Activated B cell treated with CpG ODN at 0.5 μM for 24 hours (primary cell): ENCODE measurements at regions of chr6 and their contacts with region 1.

Region 1: GRCh38 chr6:150741633-150742504 is 123.6 kb upstream of the MTHFD1L start:
- DNase-seq: no peak
- ATAC-seq: peak; percentile 72
- H3K4me3 Mint-ChIP-seq: no peak overlapping the region
- H3K27ac Mint-ChIP-seq: peak overlapping the region; percentile 57
- H3K4me1 Mint-ChIP-seq: peaks cover 66% of the 10 kb centered on the region
- H3K27me3 Mint-ChIP-seq: no peaks in the 10 kb centered on the region
- CTCF ChIP-seq: peak; percentile 52

Region 2: DNA sequence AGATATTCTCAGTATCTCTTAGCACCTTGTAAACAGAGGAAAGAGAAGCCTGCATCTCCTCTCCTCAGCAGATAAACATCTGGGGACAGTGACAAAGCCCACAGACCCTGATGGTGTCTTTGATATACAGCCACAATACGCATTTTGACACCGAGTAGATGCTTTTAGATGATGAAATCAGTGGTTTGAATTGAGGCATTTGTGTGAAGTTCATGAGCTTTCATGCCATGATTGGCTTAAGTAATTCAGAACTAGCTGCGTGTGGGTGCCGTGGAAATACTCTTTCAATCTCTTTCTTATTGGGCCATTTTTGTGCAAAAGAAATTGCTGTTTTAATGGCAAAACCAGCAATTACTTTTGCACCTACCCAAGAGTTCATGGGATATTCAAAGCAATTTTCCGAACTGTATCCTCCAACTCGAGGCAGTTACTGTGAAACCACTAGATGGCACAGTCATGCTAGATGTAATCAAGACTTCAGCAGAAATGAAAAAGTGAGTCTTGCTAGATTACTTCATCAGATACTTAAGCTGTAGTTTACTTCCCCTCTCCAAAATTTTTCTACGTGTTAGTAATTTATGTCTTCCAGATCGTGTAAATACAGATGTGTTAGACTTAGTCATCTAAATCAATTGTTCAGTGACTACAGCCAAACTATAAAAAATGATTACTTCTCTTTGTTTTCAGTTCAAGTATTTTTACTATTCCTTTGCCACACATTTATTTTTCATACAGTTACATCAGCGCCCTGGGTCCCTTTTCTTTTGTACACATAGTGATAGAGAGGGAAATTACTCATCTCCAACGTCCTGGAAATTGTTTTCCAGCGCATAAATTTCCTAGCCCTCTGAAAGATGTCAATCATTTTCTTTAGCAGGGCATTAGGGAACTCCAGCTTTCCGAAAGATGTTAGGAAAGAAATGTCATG is 323.7 kb before region 1 on chr6:
- CTCF ChIA-PET with region 1: interaction called, 60 read pairs
- POLR2A ChIA-PET with region 1: interaction called, 10 read pairs
- intact Hi-C with region 1: loop called (anchors 1 kb)
- DNase-seq: no peak
- ATAC-seq: peak; percentile 90
- H3K4me3 Mint-ChIP-seq: peak overlapping the region; percentile 82
- H3K27ac Mint-ChIP-seq: peak overlapping the region; percentile 77
- H3K4me1 Mint-ChIP-seq: peaks cover 14% of the 10 kb centered on the region
- H3K27me3 Mint-ChIP-seq: peaks cover 16% of the 10 kb centered on the region
- CTCF ChIP-seq: peak; percentile 58

Region 3: DNA sequence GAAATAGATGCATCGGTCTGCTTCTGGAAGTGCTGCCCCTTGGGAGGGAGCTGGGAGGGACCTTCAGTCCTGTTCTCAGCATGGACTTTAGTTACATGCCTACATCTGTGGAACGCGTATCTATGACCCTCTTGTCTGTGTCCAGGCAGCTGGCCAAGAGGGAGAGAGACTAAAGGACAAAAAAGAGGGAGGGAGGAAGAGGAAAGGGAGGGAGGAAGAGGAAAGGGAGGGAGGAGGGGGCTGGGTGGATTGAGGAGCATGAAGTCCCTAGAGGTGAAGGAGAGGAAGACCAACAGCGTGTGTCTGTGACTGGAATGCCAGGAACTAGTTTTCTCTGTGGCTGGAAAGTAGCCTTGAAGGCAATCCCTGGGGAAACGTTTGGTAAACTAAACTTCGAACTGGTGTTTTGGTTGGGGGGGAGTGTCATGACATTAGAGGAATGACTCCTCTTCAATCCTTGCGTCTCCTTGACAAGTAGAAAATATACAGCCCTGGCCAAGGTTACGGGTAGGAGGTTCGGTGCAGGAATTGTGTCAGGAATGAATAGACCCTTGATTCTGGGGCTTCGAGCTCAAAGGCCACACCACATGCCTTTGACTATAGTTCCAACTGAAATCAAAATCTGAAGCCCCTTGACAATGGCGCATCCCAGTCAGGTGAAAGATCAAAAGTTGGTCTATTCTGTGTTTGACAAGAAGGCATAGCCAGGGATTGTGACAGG is 194.2 kb before region 1 on chr6:
- CTCF ChIA-PET with region 1: no interaction called
- POLR2A ChIA-PET with region 1: no interaction called
- intact Hi-C with region 1: loop called (anchors 5 kb)
- DNase-seq: no peak
- ATAC-seq: no peak
- H3K4me3 Mint-ChIP-seq: no peak overlapping the region
- H3K27ac Mint-ChIP-seq: no peak overlapping the region
- H3K4me1 Mint-ChIP-seq: no peaks in the 10 kb centered on the region
- H3K27me3 Mint-ChIP-seq: peaks cover 16% of the 10 kb centered on the region
- CTCF ChIP-seq: no peak

Region 4: DNA sequence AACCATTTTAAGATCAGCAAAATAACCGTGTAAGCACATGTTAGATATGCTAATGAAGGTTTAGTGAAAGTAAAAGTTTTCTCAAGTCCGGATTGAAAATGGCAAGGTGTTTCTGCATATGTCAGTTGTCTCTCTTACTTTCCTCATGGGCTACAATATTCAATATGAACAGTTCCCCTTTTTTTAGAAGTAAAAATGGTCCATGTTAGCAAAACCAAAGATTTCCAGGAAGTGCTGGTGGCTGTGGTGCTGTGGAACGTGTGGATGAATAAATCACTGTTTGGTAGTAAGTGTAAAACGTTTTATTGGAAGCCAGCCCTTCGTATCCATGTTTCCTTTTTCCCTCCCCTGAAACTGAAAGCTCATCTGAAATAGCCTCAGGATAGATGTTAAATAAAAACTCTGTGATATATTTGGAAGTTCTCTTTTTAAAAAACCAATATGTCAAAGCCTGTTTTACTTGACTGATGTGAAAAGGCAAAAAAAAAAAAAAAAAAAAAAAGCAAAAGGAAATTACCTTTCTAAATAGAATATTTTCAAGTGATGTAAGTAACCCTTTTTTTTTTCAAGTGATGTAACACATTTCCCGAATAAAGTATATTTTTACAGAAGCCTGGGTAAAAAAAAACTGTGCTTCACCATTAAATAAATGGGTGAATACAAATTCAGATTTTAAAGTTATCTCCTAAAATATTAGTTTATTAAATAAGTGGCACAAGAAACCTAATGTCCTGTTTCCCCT is 100.3 kb before region 1 on chr6:
- CTCF ChIA-PET with region 1: interaction called, 5 read pairs
- POLR2A ChIA-PET with region 1: no interaction called
- intact Hi-C with region 1: loop called (anchors 2 kb)
- DNase-seq: no peak
- ATAC-seq: peak; percentile 49
- H3K4me3 Mint-ChIP-seq: peak overlapping the region; percentile 77
- H3K27ac Mint-ChIP-seq: peak overlapping the region; percentile 91
- H3K4me1 Mint-ChIP-seq: peaks cover 90% of the 10 kb centered on the region
- H3K27me3 Mint-ChIP-seq: no peaks in the 10 kb centered on the region
- CTCF ChIP-seq: no peak

Region 5: GRCh38 chr6:150685860-150686259 is 56.0 kb before region 1 on chr6:
- CTCF ChIA-PET with region 1: interaction called, 14 read pairs
- POLR2A ChIA-PET with region 1: no interaction called
- intact Hi-C with region 1: loop called (anchors 2 kb)
- DNase-seq: no peak
- ATAC-seq: peak; percentile 32
- H3K4me3 Mint-ChIP-seq: no peak overlapping the region
- H3K27ac Mint-ChIP-seq: peak overlapping the region; percentile 85
- H3K4me1 Mint-ChIP-seq: peaks cover 95% of the 10 kb centered on the region
- H3K27me3 Mint-ChIP-seq: no peaks in the 10 kb centered on the region
- CTCF ChIP-seq: no peak

Region 6: GRCh38 chr6:150759483-150759882 is 17.6 kb after region 1 on chr6:
- CTCF ChIA-PET with region 1: interaction called, 4 read pairs
- POLR2A ChIA-PET with region 1: no interaction called
- intact Hi-C with region 1: loop called (anchors 2 kb)
- DNase-seq: no peak
- ATAC-seq: no peak
- H3K4me3 Mint-ChIP-seq: no peak overlapping the region
- H3K27ac Mint-ChIP-seq: peak overlapping the region; percentile 24
- H3K4me1 Mint-ChIP-seq: peaks cover 42% of the 10 kb centered on the region
- H3K27me3 Mint-ChIP-seq: no peaks in the 10 kb centered on the region
- CTCF ChIP-seq: no peak

Region 7: DNA sequence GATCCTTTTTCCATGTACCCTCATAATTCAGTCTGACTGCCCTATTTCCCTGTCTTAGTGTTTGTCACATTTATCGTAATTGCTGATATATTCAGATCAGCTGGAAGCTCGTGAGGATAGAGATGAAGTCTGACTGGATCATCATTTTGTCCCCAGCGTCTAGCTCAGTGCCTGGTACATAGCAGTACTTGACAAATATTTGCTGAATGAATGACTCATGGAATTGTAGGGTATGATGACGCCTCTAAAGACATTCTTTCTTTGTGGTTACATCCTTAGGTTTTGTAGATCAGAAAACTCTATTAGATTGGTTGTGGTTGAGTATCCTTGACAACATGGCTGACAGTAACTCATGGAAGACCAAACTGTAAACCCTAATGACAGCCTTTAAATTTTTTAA is 192.5 kb after region 1 on chr6:
- CTCF ChIA-PET with region 1: no interaction called
- POLR2A ChIA-PET with region 1: no interaction called
- intact Hi-C with region 1: no loop called
- DNase-seq: no peak
- ATAC-seq: no peak
- H3K4me3 Mint-ChIP-seq: no peak overlapping the region
- H3K27ac Mint-ChIP-seq: no peak overlapping the region
- H3K4me1 Mint-ChIP-seq: no peaks in the 10 kb centered on the region
- H3K27me3 Mint-ChIP-seq: no peaks in the 10 kb centered on the region
- CTCF ChIP-seq: no peak